A673 (cell line): ENCODE measurements at regions of chr1 and their contacts with region 1.

Region 1: GRCh38 chr1:248873993-248874533 is 15.2 kb upstream of the ZNF692 start:
- DNase-seq: no peak
- H3K4me3 ChIP-seq: peak overlapping the region; percentile 79
- H3K27ac ChIP-seq: no peak overlapping the region
- H3K4me1 ChIP-seq: peaks cover 5% of the 10 kb centered on the region
- H3K27me3 ChIP-seq: no peaks in the 10 kb centered on the region
- CTCF ChIP-seq: no peak

Region 2: GRCh38 chr1:248906009-248906752 is 32.1 kb after region 1 on chr1 and contains the start of gene PGBD2:
- CTCF ChIA-PET with region 1: interaction called, 7 read pairs
- POLR2A ChIA-PET with region 1: no interaction called
- intact Hi-C with region 1: loop called (anchors 1 kb)
- DNase-seq: peak; percentile 95
- H3K4me3 ChIP-seq: peak within 1 kb of the TSS; percentile 65
- H3K27ac ChIP-seq: peak within 1 kb of the TSS; percentile 92
- H3K4me1 ChIP-seq: no peaks in the 10 kb centered on the region
- H3K27me3 ChIP-seq: peaks cover 2% of the 10 kb centered on the region
- CTCF ChIP-seq: peak; percentile 78
- total RNA-seq, gene PGBD2: 5.0 and 5.7 TPM in 2 replicates